ENCODE measurements at regions of chr2 and their contacts with region 1.

Region 1: DNA sequence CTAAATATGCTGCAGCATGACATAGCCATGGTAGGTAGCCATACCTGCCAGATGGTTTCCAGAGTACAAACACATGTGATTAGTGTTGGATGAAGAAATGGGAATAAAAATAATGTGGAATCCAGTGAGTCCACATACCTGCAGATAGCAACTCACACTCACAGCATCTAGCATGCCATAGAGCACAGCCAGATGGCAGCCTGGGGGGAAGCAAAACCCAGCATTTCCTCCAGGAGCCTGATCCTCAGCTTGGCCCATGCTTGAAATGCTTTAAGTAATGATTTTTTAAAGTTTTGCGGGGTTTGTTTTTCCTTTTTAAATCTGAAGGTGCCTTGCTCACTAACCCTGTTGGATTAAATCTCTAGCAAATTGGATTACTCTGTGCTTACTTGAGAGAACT is 535.1 kb downstream of the STK39 start:
- DNase-seq: no peak

Region 2: GRCh38 chr2:167607211-167607610 is 105.1 kb before region 1 on chr2:
- intact Hi-C with region 1: loop called in 1 of 2 experiments (anchors 5 kb)
- DNase-seq: no peak